Activated CD4-positive, alpha-beta memory T cell treated with anti-CD3 and anti-CD28 coated beads for 36 hours (primary cell): ENCODE measurements at regions of chr6 and their contacts with region 1.

Region 1: DNA sequence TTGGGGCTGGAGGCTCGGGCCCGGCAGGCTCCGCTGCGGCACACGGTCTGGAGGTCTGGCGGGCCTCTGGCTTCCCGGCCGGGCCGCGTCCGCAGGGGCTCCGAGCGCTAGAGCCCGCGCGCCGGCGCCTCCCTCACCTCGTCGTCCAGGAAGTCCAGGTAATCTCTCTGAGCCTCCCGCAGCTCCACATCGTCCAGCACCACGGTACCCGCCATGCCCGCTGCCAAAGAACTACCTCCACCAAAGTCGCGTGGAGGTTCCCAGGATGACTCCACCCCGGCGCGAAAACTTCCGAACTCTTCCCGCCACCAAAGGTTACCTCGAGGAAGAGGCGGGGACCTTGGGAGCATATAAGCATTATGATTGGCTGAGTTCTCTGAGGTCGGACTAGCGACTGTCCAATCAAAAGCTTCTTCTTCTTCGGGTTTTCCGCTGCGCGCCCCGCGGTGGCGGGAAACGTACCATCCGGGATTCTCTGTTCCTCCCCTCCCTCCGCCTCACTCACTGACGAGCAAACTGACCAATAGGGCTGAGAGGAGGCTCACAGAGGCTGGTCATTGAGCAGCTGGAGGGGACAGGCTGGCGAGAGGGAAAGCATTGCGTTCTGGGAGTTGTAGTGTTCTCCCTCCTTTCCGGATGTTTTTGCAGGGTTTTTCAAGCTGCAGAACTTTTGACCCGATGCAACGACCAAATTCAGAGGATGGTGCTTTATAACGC is at the start of gene MCM3:
- DNase-seq: peak; percentile 99
- H3K4me3 Mint-ChIP-seq: no peak within 1 kb of the TSS
- H3K27ac Mint-ChIP-seq: peak within 1 kb of the TSS; percentile 61
- H3K4me1 Mint-ChIP-seq: peaks cover 50% of the 10 kb centered on the region
- H3K27me3 Mint-ChIP-seq: no peaks in the 10 kb centered on the region
- total RNA-seq, gene MCM3: 231 to 244 TPM

Region 2: GRCh38 chr6:51913265-51913664 is 371.4 kb before region 1 on chr6:
- CTCF ChIA-PET with region 1: no interaction called
- POLR2A ChIA-PET with region 1: no interaction called
- intact Hi-C with region 1: no loop called
- DNase-seq: no peak
- H3K4me3 Mint-ChIP-seq: no peak overlapping the region
- H3K27ac Mint-ChIP-seq: no peak overlapping the region
- H3K4me1 Mint-ChIP-seq: no peaks in the 10 kb centered on the region
- H3K27me3 Mint-ChIP-seq: peaks cover 1% of the 10 kb centered on the region

Region 3: DNA sequence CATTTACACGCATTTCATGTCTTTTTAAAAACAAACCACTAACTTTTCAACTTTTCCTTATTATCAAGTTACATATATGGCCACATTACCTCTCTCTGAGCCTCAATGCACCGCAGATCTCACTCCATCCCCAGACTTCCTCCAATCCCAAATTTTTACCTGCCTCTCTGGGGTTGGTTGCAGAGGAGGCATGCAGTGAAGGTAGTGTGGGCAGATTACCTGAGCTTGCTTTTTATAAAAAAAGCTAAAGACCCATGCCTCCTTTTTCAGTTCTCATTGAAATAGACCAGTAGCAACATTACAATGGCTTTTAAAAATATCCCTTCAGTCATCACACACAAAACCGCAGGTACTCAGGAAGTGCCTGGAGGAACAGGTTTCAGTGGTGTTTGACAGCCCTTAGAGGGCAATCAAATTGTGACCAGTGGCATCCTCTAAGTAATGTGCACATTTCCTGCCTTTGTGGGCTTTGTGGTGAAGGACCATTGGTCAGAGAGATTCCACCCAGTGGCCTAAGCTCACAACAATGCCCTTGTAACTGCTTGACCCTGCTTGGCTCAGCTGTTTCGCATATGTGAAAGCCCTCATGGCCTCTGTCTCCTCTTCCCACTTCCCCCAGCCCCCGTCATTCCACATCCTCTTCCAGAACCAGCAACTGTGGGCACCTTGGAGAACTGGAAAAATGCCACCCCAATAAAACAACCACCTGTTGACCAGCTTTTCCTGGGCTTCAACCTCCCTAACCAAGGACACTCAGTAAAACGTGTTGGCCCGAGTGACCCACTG is 128.6 kb before region 1 on chr6:
- CTCF ChIA-PET with region 1: interaction called, 10 read pairs
- POLR2A ChIA-PET with region 1: interaction called, 3 read pairs
- intact Hi-C with region 1: loop called (anchors 1 kb)
- DNase-seq: peak; percentile 20
- H3K4me3 Mint-ChIP-seq: no peak overlapping the region
- H3K27ac Mint-ChIP-seq: peak overlapping the region; percentile 89
- H3K4me1 Mint-ChIP-seq: peaks cover 50% of the 10 kb centered on the region
- H3K27me3 Mint-ChIP-seq: peaks cover 20% of the 10 kb centered on the region

Region 4: GRCh38 chr6:52263709-52264540 is 20.7 kb before region 1 on chr6:
- CTCF ChIA-PET with region 1: interaction called, 50 read pairs
- POLR2A ChIA-PET with region 1: interaction called, 10 read pairs
- intact Hi-C with region 1: no loop called
- DNase-seq: peak; percentile 82
- H3K4me3 Mint-ChIP-seq: no peak overlapping the region
- H3K27ac Mint-ChIP-seq: peak overlapping the region; percentile 49
- H3K4me1 Mint-ChIP-seq: no peaks in the 10 kb centered on the region
- H3K27me3 Mint-ChIP-seq: no peaks in the 10 kb centered on the region

Region 5: GRCh38 chr6:52361945-52362442 is 77.4 kb after region 1 on chr6 and contains the start of gene PAQR8:
- CTCF ChIA-PET with region 1: interaction called, 59 read pairs
- POLR2A ChIA-PET with region 1: interaction called, 44 read pairs
- intact Hi-C with region 1: loop called (anchors 1 kb)
- DNase-seq: peak; percentile 85
- H3K4me3 Mint-ChIP-seq: peak within 1 kb of the TSS; percentile 99
- H3K27ac Mint-ChIP-seq: peak within 1 kb of the TSS; percentile 92
- H3K4me1 Mint-ChIP-seq: peaks cover 33% of the 10 kb centered on the region
- H3K27me3 Mint-ChIP-seq: no peaks in the 10 kb centered on the region
- total RNA-seq, gene PAQR8: 11.2 to 12.2 TPM

Region 6: DNA sequence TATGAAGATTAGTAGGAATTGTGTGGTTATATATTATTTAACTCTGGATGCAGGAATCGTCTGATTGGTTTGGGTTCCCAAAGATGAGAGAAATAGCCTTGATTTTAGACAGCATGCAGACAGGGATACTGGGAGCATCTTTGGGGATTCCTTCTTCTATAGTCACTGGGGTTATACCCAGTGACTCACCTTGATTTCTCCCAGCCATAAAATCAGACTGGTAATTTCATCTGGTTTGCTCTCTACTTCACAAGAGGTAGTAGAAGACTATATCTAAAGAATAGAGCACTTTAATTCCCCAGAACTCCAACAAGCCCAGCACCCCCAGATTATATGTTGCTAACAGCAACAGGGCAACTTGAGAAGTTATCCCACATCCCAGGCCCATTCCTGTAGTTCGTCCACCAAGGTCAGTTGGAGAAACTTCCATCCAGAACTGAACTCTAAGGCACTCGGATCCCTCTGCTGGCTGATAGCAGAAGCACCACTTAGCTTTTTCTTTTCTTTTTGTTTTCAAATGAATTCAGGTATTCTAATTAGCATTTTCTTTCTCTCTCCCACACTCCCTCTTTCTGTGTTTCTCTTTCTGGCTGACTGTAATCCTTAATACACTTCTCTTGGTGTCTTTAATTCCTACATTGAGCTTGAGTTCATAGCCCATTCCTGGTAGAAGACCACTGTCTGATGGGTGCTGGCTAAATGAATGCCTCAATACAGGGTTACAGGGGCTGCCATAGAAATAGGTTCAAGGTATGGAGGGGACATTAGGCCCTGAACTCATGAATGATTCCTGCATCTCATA is 115.1 kb after region 1 on chr6:
- CTCF ChIA-PET with region 1: interaction called, 139 read pairs
- POLR2A ChIA-PET with region 1: interaction called, 16 read pairs
- intact Hi-C with region 1: loop called (anchors 1 kb)
- DNase-seq: peak; percentile 39
- H3K4me3 Mint-ChIP-seq: no peak overlapping the region
- H3K27ac Mint-ChIP-seq: peak overlapping the region; percentile 40
- H3K4me1 Mint-ChIP-seq: peaks cover 63% of the 10 kb centered on the region
- H3K27me3 Mint-ChIP-seq: no peaks in the 10 kb centered on the region

Region 7: GRCh38 chr6:52635049-52635577 is 350.5 kb after region 1 on chr6:
- CTCF ChIA-PET with region 1: no interaction called
- POLR2A ChIA-PET with region 1: no interaction called
- intact Hi-C with region 1: loop called (anchors 1 kb)
- DNase-seq: peak; percentile 62
- H3K4me3 Mint-ChIP-seq: peak overlapping the region; percentile 2
- H3K27ac Mint-ChIP-seq: peak overlapping the region; percentile 75
- H3K4me1 Mint-ChIP-seq: peaks cover 18% of the 10 kb centered on the region
- H3K27me3 Mint-ChIP-seq: peaks cover 5% of the 10 kb centered on the region

Region 8: GRCh38 chr6:53064726-53065215 is 780.2 kb after region 1 on chr6:
- CTCF ChIA-PET with region 1: no interaction called
- POLR2A ChIA-PET with region 1: no interaction called
- intact Hi-C with region 1: loop called (anchors 1 kb)
- DNase-seq: peak; percentile 98
- H3K4me3 Mint-ChIP-seq: peak overlapping the region; percentile 100
- H3K27ac Mint-ChIP-seq: peak overlapping the region; percentile 97
- H3K4me1 Mint-ChIP-seq: peaks cover 52% of the 10 kb centered on the region
- H3K27me3 Mint-ChIP-seq: no peaks in the 10 kb centered on the region